Heart left ventricle (tissue), 16 donors: ENCODE measurements at regions of chr2 and their contacts with region 1.

Region 1: DNA sequence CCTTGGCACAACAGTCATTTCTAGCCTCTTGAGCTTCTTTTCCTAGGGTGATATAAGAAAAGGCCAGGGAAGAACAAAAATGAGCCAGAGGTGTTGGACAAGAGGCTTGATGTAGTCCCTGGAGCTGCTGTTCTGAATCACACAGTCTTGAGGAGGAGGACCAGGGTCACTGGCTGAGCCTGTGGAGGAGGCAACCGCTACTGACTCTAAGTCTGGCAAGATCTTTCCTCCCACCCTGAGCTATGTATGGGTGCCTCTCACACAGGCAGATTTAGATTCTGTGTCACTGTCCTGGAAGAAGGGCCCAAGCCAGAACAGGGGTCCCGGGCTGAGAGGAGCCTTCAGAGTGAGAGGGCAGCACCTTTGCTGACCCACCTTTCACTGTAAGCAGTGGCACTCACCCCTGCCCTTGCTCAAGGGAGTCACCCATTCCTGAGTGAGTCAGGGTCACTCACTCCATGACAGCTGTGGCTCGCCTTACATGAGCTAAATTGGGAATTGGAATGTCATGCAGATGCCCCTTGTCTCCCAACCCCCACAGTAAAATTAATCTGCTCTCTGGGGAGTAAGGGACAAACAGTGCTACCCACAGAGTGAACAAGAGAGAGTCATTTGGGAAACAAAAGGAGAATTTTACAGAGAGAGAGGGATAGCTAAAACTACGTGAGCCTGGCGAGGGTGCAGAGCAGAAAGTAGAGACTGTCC is at the start of gene TRIM54:
- DNase-seq: peak in 3 of 5 donors; percentile 53 to 77 (median 69)
- ATAC-seq: peak; percentile 83 to 90 (median 88)
- H3K4me3 ChIP-seq: peak within 1 kb of the TSS; percentile 32 to 68 (median 54)
- H3K27ac ChIP-seq: peak within 1 kb of the TSS; percentile 74 to 99 (median 90)
- H3K4me1 ChIP-seq: peaks cover 0 to 32% (median 10%) of the 10 kb centered on the region in 12 donors
- H3K27me3 ChIP-seq: peaks cover 0 to 7% (median 0%) of the 10 kb centered on the region in 9 donors
- CTCF ChIP-seq: no peak
- POLR2A ChIP-seq: peak in 1 of 2 donors; percentile 56
- total RNA-seq, gene TRIM54: 175 to 329 (median 241) TPM

Region 2: DNA sequence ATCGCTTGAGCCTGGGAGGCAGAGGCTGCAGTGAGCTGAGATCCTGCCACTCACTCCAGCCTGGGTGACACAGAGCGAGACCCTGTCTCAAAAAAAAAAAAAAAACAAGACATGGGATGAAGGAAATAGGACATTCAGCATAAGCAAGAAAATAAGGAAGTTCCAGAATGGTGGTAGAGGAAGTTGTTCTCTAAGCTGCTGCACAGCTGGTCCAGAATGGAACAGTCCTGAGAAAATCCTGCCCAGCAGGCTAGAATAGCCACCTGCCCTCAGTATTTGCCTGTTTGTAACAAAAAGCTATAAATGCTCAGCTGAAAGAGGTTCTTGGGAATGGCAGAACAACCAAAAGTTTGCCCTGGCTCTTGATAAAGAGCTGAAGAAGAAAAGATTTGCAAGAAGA is 322.7 kb before region 1 on chr2:
- intact Hi-C with region 1: loop called in 6 of 10 experiments (anchors 2 to 10 kb)
- DNase-seq: no peak
- ATAC-seq: peak in 1 of 4 donors; percentile 44
- H3K4me3 ChIP-seq: no peak overlapping the region
- H3K27ac ChIP-seq: no peak overlapping the region
- H3K4me1 ChIP-seq: peaks cover 0 to 7% (median 0%) of the 10 kb centered on the region in 12 donors
- H3K27me3 ChIP-seq: peaks cover 0 to 46% (median 7%) of the 10 kb centered on the region in 9 donors
- CTCF ChIP-seq: no peak
- POLR2A ChIP-seq: no peak

Region 3: DNA sequence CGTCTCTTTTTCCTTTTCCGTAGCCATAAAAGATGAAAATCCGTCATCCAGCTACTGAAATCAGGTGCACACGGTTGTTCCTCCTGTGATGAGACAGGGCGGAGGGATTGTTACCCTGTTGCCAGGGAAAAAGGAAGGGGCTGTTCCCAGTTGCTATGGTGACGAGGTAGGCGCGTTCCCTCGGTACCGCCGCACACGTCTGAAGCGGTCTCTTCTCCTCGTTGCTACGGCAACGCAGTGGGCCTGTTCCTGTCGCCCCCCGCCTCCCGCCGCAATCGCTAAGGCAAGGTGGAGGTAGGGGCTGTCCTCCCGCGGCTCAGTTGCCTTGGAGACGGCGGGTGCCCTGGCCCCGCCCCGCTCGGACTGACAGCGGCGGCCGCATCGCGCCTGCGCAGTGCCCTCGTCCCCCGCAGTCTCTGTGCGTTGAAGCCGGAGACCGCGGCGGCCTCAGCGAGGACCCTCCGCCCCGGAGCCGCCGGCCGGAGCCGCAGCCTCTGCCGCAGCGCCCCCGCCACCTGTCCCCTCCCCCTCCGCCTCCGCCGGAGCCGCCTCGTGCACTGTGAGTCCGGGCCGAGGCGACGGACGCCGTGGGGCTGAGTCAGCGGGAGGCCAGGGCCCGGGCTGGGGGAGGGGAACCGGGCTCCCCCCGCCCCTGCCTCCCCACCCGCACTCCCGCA is 311.6 kb before region 1 on chr2 and contains the start of gene MAPRE3:
- intact Hi-C with region 1: loop called in 2 of 10 experiments (anchors 10 kb)
- DNase-seq: peak; percentile 79 to 93 (median 84)
- ATAC-seq: peak; percentile 76 to 97 (median 93)
- H3K4me3 ChIP-seq: peak within 1 kb of the TSS; percentile 64 to 96 (median 84)
- H3K27ac ChIP-seq: peak within 1 kb of the TSS in 11 of 12 donors; percentile 58 to 86 (median 72)
- H3K4me1 ChIP-seq: peaks cover 0 to 33% (median 22%) of the 10 kb centered on the region in 12 donors
- H3K27me3 ChIP-seq: no peaks in the 10 kb centered on the region
- CTCF ChIP-seq: no peak
- POLR2A ChIP-seq: peak in 1 of 2 donors; percentile 34
- total RNA-seq, gene MAPRE3: 27.4 to 55.2 (median 42.3) TPM

Region 4: DNA sequence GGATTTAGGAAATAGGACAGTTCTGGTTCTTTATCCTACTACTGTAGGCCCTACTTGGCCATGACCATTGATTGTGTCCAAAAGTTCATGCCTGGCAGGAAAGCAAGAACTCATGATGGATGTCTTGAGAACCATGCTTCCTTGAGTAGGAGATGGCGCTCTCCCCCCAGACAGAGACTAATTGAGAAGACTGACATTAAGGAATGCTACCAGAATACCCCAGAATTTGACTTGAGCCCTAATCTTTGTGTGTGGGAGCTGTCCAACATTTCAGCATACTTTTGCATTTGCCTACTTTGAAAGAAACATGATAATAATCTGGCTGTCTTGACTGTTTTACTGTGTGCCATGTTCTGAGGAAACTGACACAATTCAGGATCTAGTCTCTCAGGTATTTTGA is 288.2 kb before region 1 on chr2:
- intact Hi-C with region 1: no loop called
- DNase-seq: no peak
- ATAC-seq: no peak
- H3K4me3 ChIP-seq: no peak overlapping the region
- H3K27ac ChIP-seq: no peak overlapping the region
- H3K4me1 ChIP-seq: no peaks in the 10 kb centered on the region
- H3K27me3 ChIP-seq: no peaks in the 10 kb centered on the region
- CTCF ChIP-seq: no peak
- POLR2A ChIP-seq: no peak

Region 5: DNA sequence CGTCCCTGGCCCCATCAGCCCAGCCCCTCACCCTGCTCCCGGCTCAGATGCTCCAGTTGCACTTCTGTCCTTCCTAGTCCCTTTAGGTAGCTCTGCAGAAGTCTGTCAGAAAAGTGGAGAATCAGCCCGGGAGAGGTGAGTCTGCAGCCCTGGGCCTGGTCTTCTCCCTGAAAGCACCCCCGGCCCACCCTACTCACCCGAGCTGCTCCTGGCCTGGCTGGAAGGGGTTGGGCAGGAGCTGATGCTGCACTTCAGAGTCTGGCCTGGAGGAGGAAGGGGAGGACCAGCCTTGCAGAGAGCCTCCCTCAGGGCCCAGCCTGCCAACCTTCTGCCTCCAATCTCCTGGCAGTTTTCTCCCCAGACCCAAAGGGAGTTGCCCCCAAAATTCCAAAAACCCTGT is 179.7 kb before region 1 on chr2:
- intact Hi-C with region 1: loop called (anchors 2 to 10 kb)
- DNase-seq: no peak
- ATAC-seq: no peak
- H3K4me3 ChIP-seq: no peak overlapping the region
- H3K27ac ChIP-seq: no peak overlapping the region
- H3K4me1 ChIP-seq: peaks cover 0 to 2% (median 0%) of the 10 kb centered on the region in 12 donors
- H3K27me3 ChIP-seq: peaks cover 0 to 7% (median 0%) of the 10 kb centered on the region in 9 donors
- CTCF ChIP-seq: no peak
- POLR2A ChIP-seq: no peak

Region 6: GRCh38 chr2:27264753-27265535 is 17.1 kb before region 1 on chr2:
- intact Hi-C with region 1: loop called in 2 of 10 experiments (anchors 2 kb)
- DNase-seq: peak; percentile 75 to 86 (median 78)
- ATAC-seq: peak; percentile 62 to 85 (median 79)
- H3K4me3 ChIP-seq: peak overlapping the region; percentile 10 to 81 (median 62)
- H3K27ac ChIP-seq: peak overlapping the region in 10 of 12 donors; percentile 17 to 80 (median 57)
- H3K4me1 ChIP-seq: peaks cover 0 to 43% (median 26%) of the 10 kb centered on the region in 12 donors
- H3K27me3 ChIP-seq: peaks cover 17 to 70% (median 38%) of the 10 kb centered on the region in 9 donors
- CTCF ChIP-seq: peak; percentile 30 to 71 (median 60)
- POLR2A ChIP-seq: no peak

Region 7: GRCh38 chr2:27409321-27410073 is 127.5 kb after region 1 on chr2 and contains the start of gene PPM1G:
- intact Hi-C with region 1: no loop called
- DNase-seq: peak; percentile 95 to 98 (median 96)
- ATAC-seq: peak; percentile 99 to 100 (median 100)
- H3K4me3 ChIP-seq: peak within 1 kb of the TSS; percentile 69 to 100 (median 98)
- H3K27ac ChIP-seq: peak within 1 kb of the TSS; percentile 11 to 96 (median 90)
- H3K4me1 ChIP-seq: peaks cover 0 to 33% (median 20%) of the 10 kb centered on the region in 12 donors
- H3K27me3 ChIP-seq: no peaks in the 10 kb centered on the region
- CTCF ChIP-seq: peak in 1 of 12 donors; percentile 13
- POLR2A ChIP-seq: peak in 1 of 2 donors; percentile 72
- total RNA-seq, gene PPM1G: 31.7 to 49.7 (median 40.2) TPM